Gastrocnemius medialis (tissue), 4 donors: ENCODE measurements at regions of chr4 and their contacts with region 1.

Region 1: DNA sequence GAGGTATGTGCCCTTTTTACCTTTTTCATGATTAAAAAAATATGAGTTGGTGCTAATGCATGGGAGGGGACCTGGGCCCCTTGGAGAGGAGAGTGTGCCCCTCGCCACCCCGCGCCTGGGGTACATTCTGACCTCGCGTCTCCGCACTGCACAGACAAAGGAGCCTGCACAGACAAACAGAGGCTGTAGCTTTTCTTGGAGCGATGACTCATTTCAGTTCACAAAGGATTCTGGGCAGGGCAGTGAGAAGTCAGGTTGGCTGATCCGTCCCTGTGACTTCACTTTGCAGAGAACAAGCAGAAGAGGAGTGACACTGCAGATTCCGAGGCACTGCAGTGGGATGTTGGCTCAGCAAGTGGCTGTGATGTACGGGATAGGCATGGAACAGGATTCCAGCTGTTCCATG is 82.9 kb downstream of the STOX2 start:
- DNase-seq: peak; percentile 84 to 91
- ATAC-seq: peak; percentile 97 to 98
- H3K4me3 ChIP-seq: peak overlapping the region; percentile 53 to 64 (median 56)
- H3K27ac ChIP-seq: peak overlapping the region; percentile 84 to 90 (median 89)
- H3K4me1 ChIP-seq: peaks cover 12 to 19% of the 10 kb centered on the region in 2 donors
- H3K27me3 ChIP-seq: no peaks in the 10 kb centered on the region
- CTCF ChIP-seq: no peak
- POLR2A ChIP-seq: peak; percentile 66 to 77

Region 2: DNA sequence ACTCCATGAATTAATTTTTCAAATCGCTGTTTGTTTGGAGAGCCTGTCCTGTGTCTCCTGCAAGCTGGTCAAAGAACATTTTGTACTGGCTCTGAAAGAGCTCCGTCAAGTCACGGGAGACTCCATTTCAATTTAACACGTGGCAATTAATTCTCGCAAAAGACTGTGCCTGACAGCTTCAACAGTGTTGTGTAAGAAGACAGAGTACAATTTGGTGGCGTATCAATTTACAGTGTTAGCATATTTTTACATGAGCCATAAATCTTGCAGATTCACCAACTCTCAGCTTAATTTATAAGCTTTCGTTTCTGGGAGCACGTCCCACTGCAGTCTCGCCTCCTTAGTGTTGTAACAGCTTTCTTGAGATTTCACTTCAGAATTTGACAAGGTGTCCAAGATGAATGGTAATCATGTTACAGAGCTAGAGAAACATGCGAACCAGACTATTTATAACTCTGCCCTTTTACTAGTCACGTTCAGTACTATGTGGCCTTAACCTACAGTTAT is 399.8 kb before region 1 on chr4:
- in situ Hi-C with region 1: no loop called
- intact Hi-C with region 1: loop called (anchors 10 kb)
- DNase-seq: peak; percentile 74 to 87
- ATAC-seq: peak; percentile 96
- H3K4me3 ChIP-seq: no peak overlapping the region
- H3K27ac ChIP-seq: peak overlapping the region; percentile 85 to 95 (median 90)
- H3K4me1 ChIP-seq: peaks cover 22 to 23% of the 10 kb centered on the region in 2 donors
- H3K27me3 ChIP-seq: no peaks in the 10 kb centered on the region
- CTCF ChIP-seq: no peak
- POLR2A ChIP-seq: peak in 1 of 2 donors; percentile 48

Region 3: DNA sequence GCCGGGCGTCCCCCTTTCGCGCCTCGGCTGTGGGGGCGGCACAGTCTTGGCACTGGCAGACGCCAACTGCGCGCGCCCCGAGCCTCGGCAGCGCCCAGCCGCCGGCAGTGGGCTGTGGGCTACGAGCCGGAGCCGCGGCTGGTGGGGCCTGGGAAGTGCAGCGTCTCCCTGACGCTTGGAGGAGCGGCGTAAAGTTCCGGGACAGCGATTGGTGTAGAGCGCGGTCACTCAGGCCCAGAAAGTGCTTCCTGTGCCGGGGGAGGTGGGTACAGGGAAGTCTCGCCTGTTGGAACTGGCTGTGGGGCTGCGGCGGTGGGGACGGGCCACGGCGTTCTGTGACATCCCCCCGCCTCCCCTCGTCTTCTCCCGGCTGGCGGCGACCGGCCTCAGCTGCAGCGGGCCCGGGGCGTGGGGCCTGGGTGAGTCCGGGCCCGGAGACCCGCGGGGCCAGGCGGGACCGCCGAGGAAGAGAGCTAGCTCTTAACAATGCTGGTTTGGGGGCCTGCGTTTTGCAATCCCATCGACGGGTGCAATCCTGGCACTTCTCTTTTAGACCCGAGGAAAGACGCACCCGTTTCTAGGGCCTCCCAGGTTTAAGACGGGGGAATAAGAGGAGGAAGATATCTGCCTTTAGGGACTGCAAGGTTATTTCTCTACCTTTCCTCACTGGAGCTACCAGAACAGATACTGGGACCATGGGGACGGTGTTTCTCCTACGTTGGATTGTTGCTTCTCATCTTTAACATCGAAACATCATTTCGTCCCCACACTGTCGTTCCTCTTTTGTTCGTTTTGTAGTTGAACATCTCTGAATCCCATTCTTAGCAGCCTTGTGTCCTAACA is 328.7 kb before region 1 on chr4 and contains the starts of genes RWDD4 and TRAPPC11:
- in situ Hi-C with region 1: no loop called
- intact Hi-C with region 1: loop called (anchors 5 kb)
- DNase-seq: peak; percentile 97 to 98
- ATAC-seq: peak; percentile 99 to 100
- H3K4me3 ChIP-seq: peak within 1 kb of the TSS; percentile 72 to 99 (median 76)
- H3K27ac ChIP-seq: peak within 1 kb of the TSS; percentile 82 to 96 (median 94)
- H3K4me1 ChIP-seq: peaks cover 21 to 32% of the 10 kb centered on the region in 2 donors
- H3K27me3 ChIP-seq: no peaks in the 10 kb centered on the region
- CTCF ChIP-seq: peak in 4 of 5 experiments; percentile 32 to 57 (median 42)
- POLR2A ChIP-seq: peak; percentile 95
- total RNA-seq, gene RWDD4: 34.6 to 65.2 (median 51.9) TPM
- total RNA-seq, gene TRAPPC11: 19.3 to 31.7 (median 20.8) TPM

Region 4: DNA sequence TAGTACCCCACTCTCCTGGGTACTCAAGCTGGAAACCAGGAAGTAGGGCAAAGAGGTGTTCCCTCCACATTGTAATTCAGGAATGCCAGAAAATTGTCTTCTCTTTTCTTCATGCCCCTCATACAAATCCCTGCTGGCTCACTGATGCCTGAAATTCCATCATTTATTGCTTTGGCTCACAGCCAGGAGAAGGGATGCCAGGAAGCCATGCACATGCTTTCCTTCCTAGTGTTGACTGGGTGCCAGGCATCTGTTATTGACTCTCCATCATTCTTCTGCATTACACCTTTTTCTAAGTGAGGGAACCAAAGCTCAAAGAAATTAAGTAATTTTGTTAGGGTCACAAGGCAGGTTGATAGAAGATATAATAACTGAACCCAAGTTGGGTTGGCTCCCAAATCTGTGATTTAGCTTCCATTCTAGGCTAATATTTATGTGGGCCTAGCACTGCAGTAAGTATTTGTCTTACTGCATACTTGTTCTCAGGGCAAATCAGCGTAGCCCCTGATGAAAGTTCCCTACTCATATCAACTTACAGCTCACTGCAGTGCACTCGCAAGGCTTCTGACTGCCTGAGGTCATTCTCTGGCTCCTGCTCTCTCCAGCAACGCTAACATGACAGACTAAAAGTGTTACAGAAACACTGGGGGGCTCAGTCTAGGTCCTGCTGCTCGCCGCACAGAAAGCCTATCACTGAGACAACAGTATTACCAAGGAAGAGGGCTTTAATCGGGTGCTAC is 239.9 kb before region 1 on chr4:
- in situ Hi-C with region 1: no loop called
- intact Hi-C with region 1: loop called (anchors 10 kb)
- DNase-seq: peak in 1 of 2 donors; percentile 72
- ATAC-seq: peak; percentile 70 to 84
- H3K4me3 ChIP-seq: no peak overlapping the region
- H3K27ac ChIP-seq: peak overlapping the region; percentile 79 to 90 (median 80)
- H3K4me1 ChIP-seq: peaks cover 6 to 17% of the 10 kb centered on the region in 2 donors
- H3K27me3 ChIP-seq: no peaks in the 10 kb centered on the region
- CTCF ChIP-seq: no peak
- POLR2A ChIP-seq: no peak

Region 5: DNA sequence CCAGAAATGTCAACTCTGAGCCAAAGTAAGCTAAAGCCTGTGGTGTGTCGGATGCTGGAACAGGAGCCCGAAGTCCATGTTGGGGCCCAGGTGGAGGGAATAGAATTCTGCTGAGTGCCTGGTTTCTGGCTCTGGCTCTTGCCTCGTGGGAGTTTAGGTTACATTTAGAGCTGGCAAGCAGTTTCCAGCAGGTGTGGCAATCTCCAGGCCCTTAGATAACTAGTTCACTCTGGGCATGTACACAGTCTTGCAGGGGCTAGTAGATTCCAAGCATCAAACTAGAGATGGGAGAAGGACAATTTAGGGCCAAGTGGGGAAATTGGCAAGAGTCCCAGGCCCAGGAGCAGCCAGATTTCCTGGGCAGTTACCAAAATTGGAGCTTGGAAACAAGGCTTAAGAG is 139.2 kb before region 1 on chr4:
- in situ Hi-C with region 1: no loop called
- intact Hi-C with region 1: no loop called
- DNase-seq: no peak
- ATAC-seq: no peak
- H3K4me3 ChIP-seq: no peak overlapping the region
- H3K27ac ChIP-seq: no peak overlapping the region
- H3K4me1 ChIP-seq: no peaks in the 10 kb centered on the region
- H3K27me3 ChIP-seq: no peaks in the 10 kb centered on the region
- CTCF ChIP-seq: no peak
- POLR2A ChIP-seq: no peak

Region 6: DNA sequence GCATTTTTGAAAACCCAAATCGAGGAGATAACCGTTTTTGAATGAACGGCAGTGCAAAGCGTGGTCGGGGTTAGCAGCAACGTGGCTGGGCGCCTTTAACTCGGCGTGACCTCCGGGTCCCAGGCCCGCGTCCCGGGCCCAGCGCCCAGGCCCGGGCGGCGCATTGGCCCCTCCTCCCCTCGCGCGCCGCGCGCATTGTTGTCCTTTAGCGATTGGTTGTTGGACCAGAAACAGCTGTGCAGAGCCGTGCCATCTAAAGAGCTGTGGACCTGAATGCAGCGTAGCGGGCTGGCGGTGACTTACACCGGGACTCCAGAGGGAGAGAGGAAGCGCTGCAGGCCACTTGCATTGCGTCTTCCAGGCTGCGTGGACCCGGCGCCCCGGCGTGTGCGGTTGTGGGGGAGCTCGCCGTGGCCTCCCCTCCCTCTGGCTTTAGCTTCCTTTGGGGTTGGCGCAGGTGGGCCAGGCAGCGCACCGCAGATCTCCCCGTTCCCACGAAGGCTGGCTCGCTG is 82.9 kb before region 1 on chr4 and contains the start of gene STOX2:
- in situ Hi-C with region 1: no loop called
- intact Hi-C with region 1: loop called (anchors 2 kb)
- DNase-seq: peak; percentile 70 to 78
- ATAC-seq: peak; percentile 90 to 95
- H3K4me3 ChIP-seq: peak within 1 kb of the TSS; percentile 76 to 90 (median 86)
- H3K27ac ChIP-seq: peak within 1 kb of the TSS; percentile 79 to 90 (median 86)
- H3K4me1 ChIP-seq: peaks cover 12 to 17% of the 10 kb centered on the region in 2 donors
- H3K27me3 ChIP-seq: no peaks in the 10 kb centered on the region
- CTCF ChIP-seq: no peak
- POLR2A ChIP-seq: peak; percentile 44 to 68
- total RNA-seq, gene STOX2: 3.3 to 8.3 (median 5.9) TPM

Region 7: DNA sequence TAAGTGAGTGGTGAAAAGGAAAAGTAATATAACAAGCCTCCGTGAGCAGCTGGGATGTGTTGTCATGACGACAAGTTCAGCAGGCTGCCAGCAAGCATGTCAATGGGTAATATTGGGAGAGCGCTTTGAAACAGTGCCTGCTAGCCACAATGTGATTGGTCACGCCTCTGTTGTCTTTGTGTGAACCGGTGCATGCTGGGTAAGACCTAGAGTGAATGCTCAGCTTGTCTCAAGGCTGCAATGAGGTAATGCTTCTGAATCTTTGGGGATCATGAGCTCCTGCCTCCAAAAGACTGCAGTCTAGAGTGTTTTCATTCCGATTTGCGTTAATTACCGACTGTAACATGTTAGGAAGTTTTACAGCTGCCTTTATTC is 28.0 kb before region 1 on chr4:
- in situ Hi-C with region 1: no loop called
- intact Hi-C with region 1: loop called (anchors 2 kb)
- DNase-seq: peak; percentile 27 to 32
- ATAC-seq: peak; percentile 95 to 97
- H3K4me3 ChIP-seq: peak overlapping the region; percentile 38 to 45 (median 42)
- H3K27ac ChIP-seq: peak overlapping the region in 2 of 4 donors; percentile 32 to 38
- H3K4me1 ChIP-seq: peaks cover 0 to 9% of the 10 kb centered on the region in 2 donors
- H3K27me3 ChIP-seq: no peaks in the 10 kb centered on the region
- CTCF ChIP-seq: no peak
- POLR2A ChIP-seq: no peak